Vagina (tissue), 2 donors: ENCODE measurements at regions of chr9 and their contacts with region 1.

Region 1: GRCh38 chr9:15357050-15357653 is 50.1 kb upstream of the TTC39B start:
- DNase-seq: no peak
- H3K4me3 ChIP-seq: no peak overlapping the region
- H3K27ac ChIP-seq: no peak overlapping the region
- H3K4me1 ChIP-seq: no peaks in the 10 kb centered on the region
- H3K27me3 ChIP-seq: no peaks in the 10 kb centered on the region
- CTCF ChIP-seq: no peak
- POLR2A ChIP-seq: no peak

Region 2: DNA sequence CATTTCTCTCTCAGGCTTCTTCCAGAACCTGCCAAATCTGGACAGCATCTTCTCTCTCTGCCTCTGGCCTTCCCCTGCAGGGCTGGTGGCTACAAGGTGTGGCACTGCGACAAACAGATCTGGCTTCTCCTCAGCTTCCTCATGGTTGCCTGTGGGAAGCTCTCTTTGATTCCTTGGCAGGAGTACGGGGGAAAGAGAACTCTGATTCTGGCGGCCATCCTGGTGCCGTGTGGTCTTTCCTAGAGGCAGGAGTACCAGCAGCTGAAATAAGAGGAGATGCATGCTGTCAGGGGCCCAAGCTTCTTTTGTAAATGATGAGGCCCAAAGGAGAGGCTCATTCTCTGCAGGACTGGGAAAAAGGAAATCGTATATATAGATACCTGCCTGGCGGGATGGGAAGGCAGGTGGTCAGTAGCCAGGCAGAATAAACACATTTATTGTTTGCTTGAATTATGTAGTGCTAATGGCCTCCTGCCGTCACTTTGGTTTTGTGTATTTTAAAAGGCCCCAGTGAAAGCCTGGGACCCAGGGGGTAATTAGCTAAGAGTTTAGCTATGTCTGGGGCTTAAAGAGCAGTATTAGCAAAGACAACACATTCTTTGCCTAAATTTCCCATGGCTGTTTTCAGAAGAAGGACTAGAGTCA is 634.6 kb before region 1 on chr9 and contains the start of gene CER1:
- intact Hi-C with region 1: loop called (anchors 10 kb)
- DNase-seq: no peak
- H3K4me3 ChIP-seq: no peak within 1 kb of the TSS
- H3K27ac ChIP-seq: no peak within 1 kb of the TSS
- H3K4me1 ChIP-seq: no peaks in the 10 kb centered on the region
- H3K27me3 ChIP-seq: no peaks in the 10 kb centered on the region
- CTCF ChIP-seq: no peak
- POLR2A ChIP-seq: no peak
- total RNA-seq, gene CER1: not detected

Region 3: DNA sequence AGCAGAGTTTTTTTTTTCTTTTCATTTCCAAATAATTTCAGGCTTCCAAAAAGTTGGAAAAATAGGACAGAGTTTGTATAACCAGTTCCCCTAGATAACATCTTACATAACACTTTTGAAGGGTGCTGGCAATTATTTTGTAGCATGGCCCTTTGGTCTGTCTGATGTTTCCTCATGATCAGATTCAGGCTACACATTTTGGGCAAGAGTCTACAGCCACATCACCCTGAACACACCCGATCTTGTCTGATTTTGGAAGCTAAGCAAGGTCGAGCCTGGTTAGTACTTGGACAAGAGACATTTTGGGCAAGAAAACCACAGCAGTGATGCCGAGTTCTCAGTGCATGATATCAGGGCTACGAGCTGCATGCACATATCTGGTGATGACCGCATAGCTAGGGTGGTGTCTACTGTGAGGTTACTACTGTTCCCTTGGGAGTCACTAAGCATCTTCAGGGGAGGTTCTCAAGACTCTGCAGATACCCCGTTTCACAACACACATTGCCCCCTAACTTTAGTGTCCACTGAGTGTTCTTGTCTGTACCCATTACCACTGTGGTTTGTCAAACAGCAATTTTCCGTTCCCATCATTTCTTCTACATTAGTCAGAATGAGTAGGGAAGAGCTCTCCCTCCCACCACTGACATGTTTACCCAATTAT is 136.4 kb before region 1 on chr9:
- intact Hi-C with region 1: no loop called
- DNase-seq: no peak
- H3K4me3 ChIP-seq: no peak overlapping the region
- H3K27ac ChIP-seq: no peak overlapping the region
- H3K4me1 ChIP-seq: peaks cover 10% of the 10 kb centered on the region
- H3K27me3 ChIP-seq: no peaks in the 10 kb centered on the region
- CTCF ChIP-seq: no peak
- POLR2A ChIP-seq: no peak

Region 4: DNA sequence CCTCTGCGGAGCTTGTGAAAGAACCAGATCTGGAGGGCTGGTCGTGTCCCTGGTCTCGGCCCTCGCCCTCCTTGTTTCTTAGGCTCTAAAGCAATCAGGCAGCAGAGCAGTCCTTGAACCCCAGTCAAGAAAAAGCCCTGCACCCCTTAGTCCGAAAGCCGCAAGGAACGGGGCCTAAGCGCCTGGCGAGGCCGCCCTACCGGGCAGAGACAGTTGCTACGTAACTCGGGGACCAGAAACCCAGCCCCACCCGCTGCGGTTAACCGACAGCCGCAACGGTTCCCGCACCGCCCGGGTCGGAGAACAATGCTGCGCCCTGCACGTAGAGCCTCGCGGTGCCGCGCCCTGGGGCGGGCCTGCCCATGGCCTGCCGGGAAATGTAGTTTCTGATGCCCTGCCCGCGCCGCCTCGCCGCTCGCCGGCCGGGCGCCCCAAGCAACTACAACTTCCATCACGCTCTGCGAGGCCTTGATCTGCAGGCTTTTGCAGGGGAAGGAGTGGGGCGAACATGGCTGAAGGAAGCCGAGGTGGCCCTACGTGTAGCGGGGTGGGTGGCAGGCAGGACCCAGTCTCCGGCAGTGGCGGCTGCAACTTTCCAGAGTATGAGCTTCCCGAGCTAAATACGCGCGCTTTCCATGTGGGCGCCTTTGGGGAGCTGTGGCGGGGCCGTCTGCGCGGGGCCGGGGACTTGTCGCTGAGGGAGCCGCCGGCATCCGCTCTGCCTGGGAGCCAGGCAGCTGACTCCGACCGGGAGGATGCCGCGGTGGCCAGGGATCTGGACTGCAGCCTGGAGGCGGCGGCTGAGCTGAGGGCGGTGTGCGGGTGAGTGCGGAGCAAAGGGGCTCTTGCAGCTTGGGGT is 65.4 kb after region 1 on chr9 and contains the start of gene SNAPC3:
- intact Hi-C with region 1: no loop called
- DNase-seq: peak in 1 of 2 donors; percentile 94
- H3K4me3 ChIP-seq: peak within 1 kb of the TSS; percentile 60 to 94
- H3K27ac ChIP-seq: peak within 1 kb of the TSS; percentile 91
- H3K4me1 ChIP-seq: peaks cover 45% of the 10 kb centered on the region
- H3K27me3 ChIP-seq: no peaks in the 10 kb centered on the region
- CTCF ChIP-seq: no peak
- POLR2A ChIP-seq: peak in 1 of 2 donors; percentile 37
- total RNA-seq, gene SNAPC3: 22.6 TPM